ENCODE measurements at regions of chr4 and their contacts with region 1.

Region 1: DNA sequence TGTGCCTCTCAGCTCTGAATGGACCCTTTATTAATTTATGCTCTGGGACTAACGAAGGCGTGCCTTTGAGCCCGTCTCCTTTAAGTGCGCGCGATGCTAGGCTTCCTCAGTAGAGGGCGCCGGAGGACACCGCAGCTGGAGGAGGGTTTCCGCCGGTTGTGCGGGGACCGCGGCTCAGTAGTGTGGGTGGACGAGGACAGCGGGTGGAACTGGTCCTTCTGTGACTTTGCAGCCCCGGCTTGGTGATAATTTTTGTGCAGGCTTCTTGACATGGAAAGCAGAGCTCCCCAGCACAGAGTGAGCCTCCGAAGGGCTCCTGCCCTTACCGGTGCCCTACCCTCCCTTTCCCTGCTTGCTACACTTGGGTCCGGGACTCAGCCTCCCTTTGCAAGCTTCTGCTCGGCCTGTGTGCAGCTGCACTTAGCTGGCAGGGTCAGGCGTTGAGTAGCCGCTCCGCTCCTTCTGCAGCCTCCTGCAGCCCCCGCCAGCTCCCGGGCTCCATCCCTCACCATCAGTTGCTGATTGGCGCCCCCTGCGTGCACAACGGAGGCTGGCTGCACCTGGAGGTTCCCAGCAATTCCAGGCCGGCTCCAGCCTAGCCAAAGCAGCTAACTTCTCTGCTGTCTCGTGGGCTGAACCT is 26.8 kb upstream of the BOD1L1 start:
- DNase-seq: peak; percentile 70
- H3K4me3 Mint-ChIP-seq: peak overlapping the region; percentile 74
- H3K27ac Mint-ChIP-seq: no peak overlapping the region
- H3K4me1 Mint-ChIP-seq: peaks cover 13% of the 10 kb centered on the region
- H3K27me3 Mint-ChIP-seq: peaks cover 7% of the 10 kb centered on the region

Region 2: DNA sequence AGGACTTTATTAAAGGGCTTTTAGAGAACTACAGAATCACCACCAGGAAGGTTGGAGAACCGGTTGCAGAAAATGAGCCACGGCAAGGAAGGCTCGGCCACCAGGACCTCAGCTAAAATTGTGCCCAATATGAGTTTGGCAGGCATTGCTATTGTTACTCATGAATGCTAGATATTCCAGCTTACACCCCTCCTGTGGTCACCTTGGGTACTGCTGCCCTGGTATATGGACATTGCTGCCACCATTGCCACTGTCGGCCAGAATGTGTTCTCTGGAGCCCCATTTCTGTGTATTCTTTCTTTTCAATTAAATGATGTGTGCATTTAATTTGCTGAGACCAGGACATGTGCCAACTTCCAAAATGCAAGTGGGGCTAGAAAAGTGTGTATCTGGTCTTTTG is 600.0 kb after region 1 on chr4:
- intact Hi-C with region 1: loop called (anchors 10 kb)
- DNase-seq: no peak
- H3K4me3 Mint-ChIP-seq: no peak overlapping the region
- H3K27ac Mint-ChIP-seq: no peak overlapping the region
- H3K4me1 Mint-ChIP-seq: no peaks in the 10 kb centered on the region
- H3K27me3 Mint-ChIP-seq: no peaks in the 10 kb centered on the region

Region 3: DNA sequence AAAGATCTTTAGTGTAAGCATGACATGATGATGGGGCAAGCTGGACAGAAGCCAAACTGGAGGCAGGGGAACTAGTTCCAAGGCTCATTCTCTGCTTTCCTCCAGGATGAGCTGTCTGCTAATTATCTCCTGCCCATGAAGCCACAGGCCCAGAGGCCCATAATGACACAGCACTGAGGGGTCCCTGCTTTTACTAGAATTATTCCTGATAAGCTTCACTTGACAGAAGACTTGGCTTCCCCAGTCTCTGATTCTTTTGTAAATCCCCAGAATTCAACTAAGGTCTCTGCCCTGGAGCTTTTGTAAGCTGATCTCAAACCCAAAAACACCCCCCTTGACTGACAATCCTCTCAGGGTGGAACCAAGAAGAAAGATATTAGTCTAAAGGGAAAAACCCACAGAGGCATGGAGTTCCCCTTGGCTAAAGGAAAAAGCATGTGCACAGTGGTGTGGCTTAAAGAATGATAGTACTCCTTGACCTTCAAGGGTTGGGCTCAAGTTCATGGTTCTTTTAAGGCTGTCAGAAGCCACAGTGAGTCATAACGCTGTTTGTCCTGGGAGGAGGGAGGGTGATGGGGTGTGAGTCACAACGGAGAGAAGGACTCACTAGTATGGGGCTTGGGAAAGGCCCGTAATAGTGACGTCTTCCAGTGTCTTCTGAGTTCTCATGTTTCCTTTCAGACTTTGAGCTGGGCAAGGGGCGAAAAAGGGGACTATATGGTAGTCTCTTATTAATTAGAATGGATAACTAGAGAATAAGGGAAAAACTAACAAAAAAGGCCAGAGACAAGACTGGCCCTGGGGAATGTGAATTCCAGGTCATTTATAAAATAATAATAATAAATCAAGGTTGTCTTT is 1202.0 kb after region 1 on chr4:
- intact Hi-C with region 1: loop called (anchors 1 kb)
- DNase-seq: peak; percentile 24
- H3K4me3 Mint-ChIP-seq: no peak overlapping the region
- H3K27ac Mint-ChIP-seq: peak overlapping the region; percentile 81
- H3K4me1 Mint-ChIP-seq: peaks cover 26% of the 10 kb centered on the region
- H3K27me3 Mint-ChIP-seq: no peaks in the 10 kb centered on the region

Region 4: DNA sequence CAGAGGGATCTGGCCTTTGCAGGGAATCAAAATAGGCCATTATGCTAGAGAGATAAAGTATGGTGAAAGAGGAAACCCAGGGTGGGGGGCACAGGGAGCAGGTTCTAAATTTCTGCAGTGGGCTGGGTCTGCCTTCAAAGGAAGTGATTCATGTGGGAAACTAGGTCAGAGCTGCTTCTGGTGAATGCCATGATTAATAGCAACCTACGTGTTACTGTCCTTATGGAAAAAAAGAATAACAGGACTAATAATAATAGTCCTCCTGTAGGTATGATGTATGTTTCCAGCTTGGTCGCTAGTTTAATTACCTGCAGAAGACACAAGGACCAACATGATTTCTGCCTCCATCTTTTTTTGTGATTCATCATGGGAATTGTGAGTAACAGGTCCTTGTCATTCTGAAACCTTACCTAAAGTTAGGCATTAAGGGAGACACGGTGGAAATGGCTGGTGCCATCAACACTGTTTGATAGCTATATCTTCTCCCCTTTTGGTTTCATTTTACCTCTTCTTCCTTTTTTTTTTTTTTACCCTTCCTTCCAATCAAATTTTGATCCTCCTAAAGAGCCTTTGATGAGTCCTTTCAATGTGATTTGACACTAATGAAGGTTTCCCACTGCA is 1528.4 kb after region 1 on chr4:
- intact Hi-C with region 1: loop called (anchors 10 kb)
- DNase-seq: no peak
- H3K4me3 Mint-ChIP-seq: no peak overlapping the region
- H3K27ac Mint-ChIP-seq: no peak overlapping the region
- H3K4me1 Mint-ChIP-seq: peaks cover 13% of the 10 kb centered on the region
- H3K27me3 Mint-ChIP-seq: no peaks in the 10 kb centered on the region

Measured in activated T-helper 2 cell treated with anti-CD3 and anti-CD28 coated beads, Interferon-gamma antibody, Interleukin-2, Interleukin-4, amounts not matched to agents 10 μg/mL and 5 μg/mL and 100 μg/mL, durations not matched to agents 14 hours and 24 hours and 36 hours (primary cell).